Right cardiac atrium (tissue), 5 donors: ENCODE measurements at regions of chr12 and their contacts with region 1.

Region 1: GRCh38 chr12:22100958-22101748 is 55.1 kb downstream of the CMAS start:
- DNase-seq: peak in 1 of 3 donors; percentile 23
- ATAC-seq: peak; percentile 46 to 66
- H3K4me3 ChIP-seq: no peak overlapping the region
- H3K27ac ChIP-seq: no peak overlapping the region
- H3K4me1 ChIP-seq: no peaks in the 10 kb centered on the region
- H3K27me3 ChIP-seq: no peaks in the 10 kb centered on the region

Region 2: DNA sequence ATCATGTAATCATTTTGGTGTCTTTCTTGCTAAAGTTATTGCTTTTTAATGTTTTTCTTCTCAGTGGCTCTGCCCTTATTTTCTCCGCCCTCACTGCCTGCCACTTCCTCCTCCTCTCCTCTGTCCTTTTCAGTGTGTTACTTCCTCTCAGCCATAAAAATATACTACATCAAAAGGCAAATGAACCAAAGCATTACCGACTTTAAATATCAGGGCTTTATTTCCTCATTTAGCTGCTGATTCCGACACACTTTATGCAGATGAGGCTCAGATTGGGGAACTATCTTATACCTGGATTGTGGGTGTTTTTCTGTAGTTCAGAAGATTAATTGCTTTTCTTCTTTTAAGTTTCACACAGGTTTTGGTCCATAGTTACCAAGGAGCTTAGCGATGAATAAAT is 63.0 kb after region 1 on chr12:
- intact Hi-C with region 1: loop called in 1 of 4 experiments (anchors 10 kb)
- DNase-seq: no peak
- ATAC-seq: no peak
- H3K4me3 ChIP-seq: no peak overlapping the region
- H3K27ac ChIP-seq: no peak overlapping the region
- H3K4me1 ChIP-seq: no peaks in the 10 kb centered on the region
- H3K27me3 ChIP-seq: no peaks in the 10 kb centered on the region

Region 3: DNA sequence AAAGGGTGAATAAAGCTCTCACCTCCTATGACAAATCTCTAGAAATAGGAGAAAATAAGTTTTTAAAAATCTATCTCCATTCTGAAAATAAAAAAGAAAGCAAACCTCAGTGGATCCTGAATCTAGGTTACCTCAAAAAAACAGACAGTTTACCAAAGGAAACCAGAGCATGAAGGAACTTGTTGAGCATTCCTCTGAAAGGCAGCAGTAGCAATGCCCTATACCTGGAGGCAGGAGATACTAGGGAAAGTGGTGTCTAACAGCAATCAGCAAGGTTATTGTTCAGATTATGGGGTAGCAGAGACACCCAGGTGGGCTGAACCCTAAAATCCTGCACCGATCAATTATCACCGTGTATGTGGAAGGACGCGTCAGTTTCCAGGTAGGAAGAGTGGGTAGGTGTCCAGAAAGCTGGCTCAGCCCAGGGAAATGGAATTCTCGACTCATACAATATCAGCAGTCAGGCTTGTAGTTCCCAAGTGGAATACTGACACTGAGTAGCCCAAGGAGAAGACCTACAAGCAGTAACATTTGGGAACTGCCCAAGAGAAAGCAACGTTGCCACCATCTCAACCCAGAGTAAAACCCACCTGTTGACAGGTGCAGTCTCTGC is 105.1 kb after region 1 on chr12:
- intact Hi-C with region 1: no loop called
- DNase-seq: no peak
- ATAC-seq: no peak
- H3K4me3 ChIP-seq: no peak overlapping the region
- H3K27ac ChIP-seq: no peak overlapping the region
- H3K4me1 ChIP-seq: no peaks in the 10 kb centered on the region
- H3K27me3 ChIP-seq: no peaks in the 10 kb centered on the region

Region 4: DNA sequence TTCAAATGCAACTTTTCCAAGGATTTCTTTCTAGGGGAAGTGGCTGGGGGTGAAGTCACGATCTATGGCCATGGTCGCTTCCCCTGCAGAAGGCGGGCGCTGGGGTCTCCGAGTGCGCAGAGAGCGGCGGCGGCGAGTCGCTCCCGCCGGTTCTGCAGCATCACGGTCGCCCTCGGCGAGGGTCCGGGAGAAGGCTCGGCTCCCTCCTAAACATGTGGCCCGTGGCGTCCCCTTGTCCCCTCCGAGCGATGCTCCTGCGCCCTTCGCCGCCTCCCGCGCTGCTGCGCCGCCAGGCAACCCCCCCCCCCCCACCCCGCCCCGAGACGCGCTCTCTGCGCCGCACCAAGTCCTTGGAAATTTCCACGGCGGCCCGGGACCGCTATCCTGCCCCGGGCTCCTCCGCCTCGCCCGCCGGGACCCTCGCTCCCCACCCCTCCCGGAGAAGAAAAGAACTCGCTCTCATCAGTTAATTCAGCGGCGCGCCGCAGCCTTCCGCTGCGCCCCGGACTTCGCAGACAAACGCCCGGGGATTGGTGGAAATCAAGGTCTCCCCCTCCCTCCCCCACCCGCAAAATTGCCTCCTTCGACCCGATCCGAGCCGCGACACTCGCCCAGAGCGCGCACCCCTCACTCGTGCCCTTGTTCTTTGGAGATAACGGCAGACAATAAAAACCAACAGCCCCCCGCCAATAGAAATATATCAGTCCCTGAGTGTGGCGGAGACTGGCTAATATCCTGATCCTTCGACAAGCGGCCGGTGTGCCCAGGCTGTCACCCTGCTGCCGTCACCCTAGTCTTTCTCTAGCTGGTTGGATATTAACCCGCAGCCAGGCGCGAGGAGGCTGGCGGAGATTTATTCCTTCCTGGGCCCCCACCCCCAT is 233.5 kb after region 1 on chr12 and contains the start of gene ST8SIA1:
- intact Hi-C with region 1: loop called (anchors 5 to 10 kb)
- DNase-seq: peak; percentile 53 to 85 (median 81)
- ATAC-seq: peak; percentile 71 to 73
- H3K4me3 ChIP-seq: peak within 1 kb of the TSS; percentile 85
- H3K27ac ChIP-seq: peak within 1 kb of the TSS; percentile 46
- H3K4me1 ChIP-seq: no peaks in the 10 kb centered on the region
- H3K27me3 ChIP-seq: no peaks in the 10 kb centered on the region
- total RNA-seq, gene ST8SIA1: 3.0 to 9.6 (median 6.3) TPM